Endothelial cell of umbilical vein (primary cell): ENCODE measurements at regions of chr20 and their contacts with region 1.

Region 1: DNA sequence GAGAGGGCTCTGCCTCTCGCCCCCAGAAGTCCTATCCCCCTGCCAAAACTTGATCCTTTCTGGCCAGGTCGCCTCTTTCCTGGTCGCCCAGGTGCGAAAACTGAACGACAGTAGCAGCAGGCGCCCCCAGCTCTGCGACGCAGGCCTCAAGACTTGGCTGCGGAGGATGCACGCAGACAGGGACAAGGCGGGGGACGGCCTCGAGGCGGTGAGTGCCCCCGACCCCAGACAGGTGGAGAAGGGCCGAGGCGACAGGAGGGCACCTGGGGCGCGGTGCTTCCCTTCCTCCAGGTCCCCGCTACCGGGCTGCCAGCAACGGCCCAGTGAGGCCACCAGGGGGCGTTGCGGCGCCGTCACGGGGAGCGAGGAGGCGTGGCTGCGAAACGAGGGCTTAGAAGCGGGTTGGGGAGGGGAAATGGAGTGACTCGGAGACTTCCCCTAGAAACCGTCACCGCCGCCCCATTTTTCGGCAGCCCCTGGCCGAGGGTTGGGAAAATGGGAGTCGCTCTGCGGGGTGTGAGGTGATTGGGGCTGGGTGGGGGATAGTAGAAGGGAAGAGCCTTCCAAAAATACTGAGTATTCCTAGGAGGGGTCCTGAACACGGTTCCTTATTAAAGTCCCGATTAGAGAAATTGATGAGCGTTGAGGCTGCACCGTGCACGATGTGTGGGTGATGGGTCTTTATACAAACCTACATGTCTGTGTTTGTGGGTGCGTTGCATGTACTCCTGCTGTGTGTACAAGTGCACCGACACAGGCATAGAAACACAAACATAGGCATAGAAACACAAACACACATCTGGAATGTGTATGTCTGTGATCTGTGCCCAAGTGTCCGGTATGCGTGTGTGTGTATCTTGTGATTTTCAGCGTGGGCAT is 44.6 kb downstream of the ARHGAP40 start:
- DNase-seq: peak; percentile 64
- H3K4me3 ChIP-seq: peak overlapping the region in 1 of 3 experiments; percentile 14
- H3K27ac ChIP-seq: no peak overlapping the region
- H3K4me1 ChIP-seq: no peaks in the 10 kb centered on the region
- H3K27me3 ChIP-seq: peaks cover 20 to 21% of the 10 kb centered on the region in 2 experiments
- CTCF ChIP-seq: peak; percentile 94 to 97
- POLR2A ChIP-seq: no peak

Region 2: DNA sequence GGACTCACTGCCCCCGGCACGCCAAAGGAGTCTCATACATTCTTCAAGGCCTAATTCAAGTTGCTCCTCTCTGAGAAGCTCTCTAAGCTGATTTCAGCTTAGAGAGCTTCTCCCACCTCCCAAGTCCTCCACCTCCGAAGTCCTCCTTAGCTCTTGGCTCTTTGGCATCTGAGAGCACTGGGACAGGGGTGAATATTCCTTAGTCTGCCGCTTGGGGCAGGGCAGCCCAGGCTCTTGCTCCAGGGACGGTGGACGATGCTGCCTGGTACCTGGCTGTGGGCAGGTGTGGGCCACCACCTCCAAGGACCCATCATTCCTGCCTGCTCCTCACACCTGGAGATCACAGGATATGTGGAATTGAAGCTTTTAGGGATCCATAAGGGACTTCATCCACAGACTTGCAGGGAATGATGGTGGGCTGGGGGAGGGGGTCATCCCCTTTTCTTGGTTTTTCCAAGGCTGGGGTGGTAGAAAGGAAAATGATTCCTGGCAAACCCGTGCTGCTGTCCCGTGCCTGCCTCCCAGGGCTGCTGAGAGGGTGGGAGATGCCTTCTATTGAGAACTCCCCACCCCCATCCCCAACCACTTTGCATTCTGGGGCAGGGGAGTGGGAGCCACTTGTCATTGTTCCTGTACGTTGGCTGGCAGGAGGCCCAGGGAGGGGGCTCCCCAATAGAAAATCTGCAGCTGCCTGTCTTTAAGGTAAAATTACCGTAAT is 12.8 kb after region 1 on chr20:
- CTCF ChIA-PET with region 1: interaction called, 41 read pairs
- POLR2A ChIA-PET with region 1: no interaction called
- dilution Hi-C with region 1: no loop called
- intact Hi-C with region 1: no loop called
- DNase-seq: peak; percentile 16
- H3K4me3 ChIP-seq: no peak overlapping the region
- H3K27ac ChIP-seq: no peak overlapping the region
- H3K4me1 ChIP-seq: no peaks in the 10 kb centered on the region
- H3K27me3 ChIP-seq: peaks cover 4 to 8% of the 10 kb centered on the region in 2 experiments
- CTCF ChIP-seq: peak; percentile 52 to 69
- POLR2A ChIP-seq: no peak

Region 3: DNA sequence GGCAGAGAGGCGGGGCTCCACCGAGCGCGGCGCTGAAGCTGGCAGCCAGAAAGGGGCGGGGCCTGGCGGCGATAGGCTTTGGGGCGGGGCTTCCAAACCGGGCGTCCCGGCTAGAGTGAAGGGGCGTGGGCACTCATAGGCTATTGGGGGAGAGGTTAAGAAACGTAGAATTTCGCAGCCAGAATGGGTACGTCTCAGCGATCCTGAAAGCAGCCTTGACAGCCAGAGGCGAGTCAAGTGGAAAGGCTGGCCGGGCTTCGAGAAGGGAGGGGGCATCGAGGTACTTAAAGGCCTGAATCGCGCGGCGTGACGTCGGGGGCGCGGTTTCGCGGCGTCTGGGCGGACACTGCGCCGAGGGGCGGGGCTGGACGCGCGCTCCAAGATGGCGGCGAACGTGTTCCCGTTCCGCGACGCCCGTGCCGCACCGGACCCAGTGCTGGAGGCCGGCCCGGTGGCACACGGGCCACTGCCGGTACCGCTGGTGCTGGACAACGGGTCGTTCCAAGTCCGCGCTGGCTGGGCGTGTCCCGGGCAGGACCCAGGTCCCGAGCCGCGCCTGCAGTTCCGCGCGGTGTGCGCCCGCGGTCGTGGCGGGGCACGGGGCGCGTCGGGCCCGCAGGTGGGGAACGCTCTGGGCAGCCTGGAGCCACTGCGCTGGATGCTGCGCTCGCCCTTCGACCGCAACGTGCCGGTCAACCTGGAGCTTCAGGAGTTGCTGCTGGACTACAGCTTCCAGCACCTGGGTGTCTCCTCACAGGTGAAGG is 102.1 kb after region 1 on chr20 and contains the start of gene ACTR5:
- CTCF ChIA-PET with region 1: interaction called, 52 read pairs
- POLR2A ChIA-PET with region 1: no interaction called
- dilution Hi-C with region 1: no loop called
- intact Hi-C with region 1: loop called (anchors 1 kb)
- DNase-seq: peak; percentile 94
- H3K4me3 ChIP-seq: peak within 1 kb of the TSS; percentile 26 to 86 (median 77)
- H3K27ac ChIP-seq: peak within 1 kb of the TSS; percentile 46
- H3K4me1 ChIP-seq: peaks cover 6% of the 10 kb centered on the region
- H3K27me3 ChIP-seq: no peaks in the 10 kb centered on the region
- CTCF ChIP-seq: no peak
- POLR2A ChIP-seq: peak; percentile 80
- total RNA-seq, gene ACTR5: 9.7 and 11.3 TPM in 2 replicates

Region 4: DNA sequence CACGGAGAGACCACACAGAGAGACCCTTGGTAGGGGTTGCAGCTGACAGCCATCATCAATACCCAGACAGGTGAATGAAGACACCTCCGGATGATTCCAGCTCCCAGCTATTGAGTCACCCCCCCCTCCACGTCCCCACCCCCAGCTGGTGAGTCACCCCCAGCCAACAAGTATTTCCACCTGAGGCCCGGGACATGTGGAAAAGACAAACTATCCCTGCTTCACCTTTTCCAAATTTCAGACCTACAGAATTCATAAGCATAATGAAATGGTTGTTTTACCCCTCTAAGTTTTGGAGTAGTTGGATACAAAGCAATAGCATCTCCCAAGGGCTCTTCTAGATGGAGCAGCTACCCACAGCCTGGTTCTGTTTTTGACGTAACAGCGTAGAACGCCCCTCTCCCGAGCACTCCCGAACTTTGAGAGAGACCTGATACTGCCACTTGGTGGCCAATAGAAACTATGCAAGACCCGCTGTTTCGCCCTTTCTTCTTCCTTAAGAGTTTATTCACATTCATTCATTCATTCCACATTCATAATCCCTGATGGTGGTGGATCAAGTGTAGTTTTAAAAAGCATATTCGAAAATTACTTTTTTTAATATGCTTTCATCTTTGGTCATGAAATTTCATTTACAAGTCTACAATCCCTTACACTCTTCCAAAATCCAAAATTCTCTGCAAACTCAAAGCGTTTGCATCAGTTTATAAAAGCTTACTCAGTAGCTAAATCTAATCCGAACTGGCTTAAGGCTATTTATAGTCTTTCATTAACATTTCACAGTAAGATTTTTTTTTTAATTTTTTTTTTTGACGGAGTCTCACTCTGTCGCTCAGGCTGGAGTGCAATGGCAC is 144.2 kb after region 1 on chr20:
- CTCF ChIA-PET with region 1: interaction called, 11 read pairs
- POLR2A ChIA-PET with region 1: no interaction called
- dilution Hi-C with region 1: no loop called
- intact Hi-C with region 1: loop called (anchors 1 kb)
- DNase-seq: peak; percentile 66
- H3K4me3 ChIP-seq: no peak overlapping the region
- H3K27ac ChIP-seq: no peak overlapping the region
- H3K4me1 ChIP-seq: no peaks in the 10 kb centered on the region
- H3K27me3 ChIP-seq: peaks cover 0 to 5% of the 10 kb centered on the region in 2 experiments
- CTCF ChIP-seq: peak; percentile 59 to 66
- POLR2A ChIP-seq: no peak

Region 5: GRCh38 chr20:38893565-38894090 is 247.4 kb after region 1 on chr20:
- CTCF ChIA-PET with region 1: interaction called, 10 read pairs
- POLR2A ChIA-PET with region 1: no interaction called
- dilution Hi-C with region 1: no loop called
- intact Hi-C with region 1: loop called (anchors 1 kb)
- DNase-seq: peak; percentile 65
- H3K4me3 ChIP-seq: no peak overlapping the region
- H3K27ac ChIP-seq: no peak overlapping the region
- H3K4me1 ChIP-seq: peaks cover 5% of the 10 kb centered on the region
- H3K27me3 ChIP-seq: no peaks in the 10 kb centered on the region
- CTCF ChIP-seq: peak; percentile 86 to 99
- POLR2A ChIP-seq: no peak

Region 6: DNA sequence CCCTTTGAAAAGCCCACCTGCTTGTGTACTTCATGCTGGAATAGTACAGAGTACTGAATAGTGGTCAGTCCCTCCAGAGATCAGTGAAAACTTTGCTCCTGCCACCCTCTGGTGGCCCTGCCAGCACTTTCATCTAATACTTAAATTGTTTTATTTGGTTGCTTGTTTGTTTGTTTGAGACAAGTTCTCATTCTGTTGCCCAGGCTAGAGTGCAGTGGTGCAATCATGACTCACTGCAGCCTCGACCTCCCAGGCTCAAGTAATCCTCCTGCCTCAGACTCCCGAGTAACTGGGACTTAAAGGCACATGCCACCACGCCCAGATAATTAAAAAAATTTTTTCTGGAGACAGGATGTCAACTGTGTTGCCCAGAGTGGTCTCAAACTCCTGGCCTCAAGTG is 289.1 kb after region 1 on chr20:
- CTCF ChIA-PET with region 1: interaction called, 3 read pairs
- POLR2A ChIA-PET with region 1: no interaction called
- dilution Hi-C with region 1: no loop called
- intact Hi-C with region 1: loop called (anchors 1 kb)
- DNase-seq: peak; percentile 63
- H3K4me3 ChIP-seq: no peak overlapping the region
- H3K27ac ChIP-seq: no peak overlapping the region
- H3K4me1 ChIP-seq: peaks cover 25% of the 10 kb centered on the region
- H3K27me3 ChIP-seq: no peaks in the 10 kb centered on the region
- CTCF ChIP-seq: peak; percentile 23 to 37
- POLR2A ChIP-seq: no peak

Region 7: DNA sequence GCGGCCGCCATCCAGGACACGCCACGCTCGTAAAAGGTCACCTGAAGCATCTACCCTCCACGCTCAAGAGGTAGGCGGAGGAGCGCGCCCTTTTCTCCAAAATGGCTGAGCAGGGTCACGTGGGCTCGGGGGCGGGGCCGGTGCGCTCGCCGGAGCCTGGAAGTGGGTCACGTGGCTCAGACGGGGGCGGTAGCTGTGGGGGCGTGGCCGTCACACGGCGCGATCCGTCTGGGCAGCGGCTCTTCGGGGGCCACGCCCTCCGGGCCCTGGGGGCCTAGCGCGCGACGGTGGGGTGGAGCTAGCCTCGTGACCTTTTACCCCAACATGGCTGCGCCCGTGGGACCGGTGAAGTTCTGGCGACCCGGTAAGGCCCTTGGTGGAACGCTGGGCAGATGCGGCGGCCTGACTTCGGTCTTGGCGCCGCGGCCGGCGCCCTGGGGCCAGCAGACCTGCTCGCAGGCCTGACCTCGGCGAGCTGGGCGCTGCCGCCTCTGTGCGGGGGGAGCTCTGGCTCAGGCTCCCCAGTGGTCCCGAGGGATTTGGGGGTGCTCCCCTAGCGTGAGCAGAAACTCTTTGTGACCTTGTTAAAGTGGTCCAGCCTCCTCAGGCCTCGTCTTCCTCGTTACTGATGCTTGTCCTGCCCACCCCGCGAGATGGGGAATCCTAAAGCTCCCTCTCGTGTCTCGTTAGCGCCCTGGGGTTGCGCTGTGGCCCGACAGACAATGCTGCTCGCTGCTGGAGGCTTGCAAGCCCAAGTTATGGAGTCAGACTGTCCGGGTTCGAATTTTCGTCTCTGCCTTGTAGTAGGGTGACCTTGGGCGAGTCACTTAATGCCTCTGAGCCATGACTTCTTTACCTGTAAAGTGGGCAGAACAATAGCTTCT is 316.1 kb after region 1 on chr20 and contains the start of gene DHX35:
- CTCF ChIA-PET with region 1: no interaction called
- POLR2A ChIA-PET with region 1: no interaction called
- dilution Hi-C with region 1: no loop called
- intact Hi-C with region 1: loop called (anchors 1 kb)
- DNase-seq: peak; percentile 97
- H3K4me3 ChIP-seq: peak within 1 kb of the TSS; percentile 71 to 95 (median 84)
- H3K27ac ChIP-seq: peak within 1 kb of the TSS; percentile 62
- H3K4me1 ChIP-seq: peaks cover 19% of the 10 kb centered on the region
- H3K27me3 ChIP-seq: no peaks in the 10 kb centered on the region
- CTCF ChIP-seq: peak; percentile 11 to 52
- POLR2A ChIP-seq: peak; percentile 72
- total RNA-seq, gene DHX35: 9.8 and 10.0 TPM in 2 replicates